ENCODE measurements at regions of chr2 and their contacts with region 1.

Region 1: GRCh38 chr2:105950521-105951383 is 206.0 kb downstream of the NCK2 start:
- DNase-seq: no peak
- H3K4me3 ChIP-seq: no peak overlapping the region
- H3K27ac ChIP-seq: no peak overlapping the region
- H3K4me1 ChIP-seq: no peaks in the 10 kb centered on the region
- H3K27me3 ChIP-seq: no peaks in the 10 kb centered on the region
- CTCF ChIP-seq: no peak
- POLR2A ChIP-seq: no peak

Region 2: DNA sequence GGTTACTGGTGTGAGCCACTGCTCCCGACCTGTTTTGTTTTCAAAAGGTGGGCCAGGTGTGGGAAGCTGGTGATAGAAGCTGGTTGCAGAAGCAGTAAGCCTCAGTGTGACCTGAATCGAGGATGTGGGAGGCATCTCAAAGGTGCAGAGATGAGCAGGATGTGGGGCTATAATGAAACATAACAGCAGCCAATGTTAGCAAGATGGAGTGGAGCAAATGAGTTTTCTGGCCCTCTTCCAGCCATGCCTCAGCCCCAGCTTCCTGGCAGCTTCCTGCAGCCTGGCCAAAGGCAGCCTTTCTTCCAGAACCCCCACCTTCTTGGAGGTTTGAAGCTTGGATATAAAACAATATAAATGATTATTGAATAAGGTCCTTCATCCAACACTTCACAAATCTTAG is 21.2 kb before region 1 on chr2:
- intact Hi-C with region 1: loop called (anchors 1 kb)
- DNase-seq: no peak
- H3K4me3 ChIP-seq: no peak overlapping the region
- H3K27ac ChIP-seq: no peak overlapping the region
- H3K4me1 ChIP-seq: peaks cover 7% of the 10 kb centered on the region
- H3K27me3 ChIP-seq: no peaks in the 10 kb centered on the region
- CTCF ChIP-seq: no peak
- POLR2A ChIP-seq: no peak

Measured in vagina (tissue), 2 donors.